ENCODE measurements at regions of chr1 and their contacts with region 1.

Region 1: DNA sequence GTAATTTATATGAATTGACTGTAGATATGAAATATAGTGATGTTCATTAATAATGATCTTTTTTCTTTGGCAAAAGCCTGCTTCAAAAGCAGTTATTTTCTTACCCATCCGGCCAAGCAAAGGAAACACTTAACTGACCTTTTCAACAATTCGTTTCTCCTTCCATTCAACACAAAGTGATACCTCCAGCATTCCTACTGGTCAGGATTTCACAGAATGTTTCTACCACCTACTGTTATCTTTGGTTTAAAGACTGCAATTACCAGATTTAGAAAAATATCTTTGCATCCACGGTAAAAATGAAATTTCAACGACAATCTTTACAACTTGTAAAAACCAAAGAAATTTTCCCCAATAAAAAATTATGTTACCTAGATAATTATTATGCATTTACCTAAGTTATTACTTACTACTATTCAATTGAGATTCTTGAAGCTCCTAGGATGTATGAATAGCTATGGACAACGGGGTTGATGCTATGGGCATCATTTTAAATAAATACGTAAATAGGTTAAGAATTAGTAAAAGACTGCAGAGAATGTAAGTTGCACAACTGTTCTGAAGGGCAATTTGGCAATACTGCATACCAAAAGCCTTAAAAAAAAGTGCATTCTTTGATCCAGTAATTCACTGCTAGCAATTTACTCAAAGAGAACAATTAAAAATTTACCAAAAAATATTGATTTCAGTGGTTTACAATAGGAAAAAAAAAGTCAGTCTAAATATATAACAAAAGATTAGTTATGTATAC is 3.7 kb downstream of the ARPC5 start:
- DNase-seq: no peak
- ATAC-seq: no peak
- H3K4me3 ChIP-seq: peak overlapping the region; percentile 93; the same call in 1 of the 2 replicates
- H3K27ac ChIP-seq: no peak overlapping the region
- H3K4me1 ChIP-seq: peaks cover 38% of the 10 kb centered on the region
- H3K27me3 ChIP-seq: no peaks in the 10 kb centered on the region
- CTCF ChIP-seq: no peak

Region 2: DNA sequence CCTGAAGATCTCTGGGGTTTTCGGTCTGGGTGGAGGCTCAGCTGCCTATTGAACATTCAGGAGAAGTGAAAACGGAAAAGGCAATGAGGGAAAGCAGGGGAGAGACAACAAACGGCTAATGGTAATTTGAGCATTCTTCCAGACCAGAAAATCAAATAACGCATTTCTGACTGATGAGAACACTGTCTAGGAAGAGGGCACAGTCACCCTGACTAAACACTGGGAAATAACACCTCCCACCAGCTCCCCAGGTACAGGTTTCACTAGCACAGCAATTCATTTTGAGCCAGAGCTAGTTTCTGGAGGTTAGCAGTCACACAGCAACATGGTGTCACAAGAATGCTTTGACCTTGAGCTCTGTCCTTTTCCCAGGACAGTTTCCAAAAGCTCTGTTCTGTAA is 62.8 kb before region 1 on chr1:
- CTCF ChIA-PET with region 1: no interaction called
- POLR2A ChIA-PET with region 1: interaction called, 19 read pairs
- intact Hi-C with region 1: no loop called
- DNase-seq: peak; percentile 82
- ATAC-seq: peak; percentile 82
- H3K4me3 ChIP-seq: peak overlapping the region; percentile 45; the same call in 1 of the 2 replicates
- H3K27ac ChIP-seq: peak overlapping the region; percentile 82
- H3K4me1 ChIP-seq: peaks cover 34% of the 10 kb centered on the region
- H3K27me3 ChIP-seq: no peaks in the 10 kb centered on the region
- CTCF ChIP-seq: no peak

Measured in PC-3 (cell line).